Dorsolateral prefrontal cortex (tissue), 120 donors: ENCODE measurements at regions of chr15 and their contacts with region 1.

Region 1: GRCh38 chr15:92808978-92809879 is 90.9 kb upstream of the CHD2 start:
- DNase-seq: peak; percentile 93 to 97 (median 96)
- H3K4me3 ChIP-seq: peak overlapping the region; percentile 52 to 95 (median 73)
- H3K27ac ChIP-seq: peak overlapping the region; percentile 96 to 100 (median 100)
- H3K27me3 ChIP-seq: no peaks in the 10 kb centered on the region
- CTCF ChIP-seq: peak; percentile 88 to 100 (median 98)

Region 2: DNA sequence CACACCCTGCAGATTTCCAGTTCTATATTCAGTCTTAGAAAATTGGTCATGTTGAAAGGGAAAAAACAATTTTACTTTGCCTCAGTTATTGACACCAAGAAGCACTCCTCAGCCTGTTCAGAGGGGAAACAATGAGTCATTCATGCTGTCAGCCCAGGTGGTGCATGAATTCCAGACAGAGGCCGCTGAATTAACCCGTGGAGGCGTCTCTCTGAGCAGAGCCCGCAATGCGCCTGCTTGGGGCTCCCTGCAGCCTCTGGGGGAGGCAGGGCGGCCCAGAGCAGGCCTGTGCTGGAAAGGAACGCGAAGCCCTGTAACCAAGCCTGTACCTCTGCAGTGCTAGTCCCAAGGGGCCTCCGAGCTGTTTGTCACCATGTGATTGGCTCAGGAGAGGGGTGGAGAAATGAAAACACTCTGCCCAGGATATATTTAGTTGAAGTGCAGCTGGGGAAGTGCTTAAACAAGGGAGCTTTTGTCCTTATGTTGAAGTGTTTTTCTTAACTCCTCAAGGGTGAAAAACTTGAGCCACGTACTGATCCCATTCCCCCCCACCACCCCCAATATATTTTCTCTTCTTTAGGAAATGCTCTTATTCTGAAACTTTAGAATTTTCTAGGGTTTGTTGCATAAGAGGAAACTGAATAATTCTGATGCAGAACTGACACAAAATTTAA is 22.6 kb after region 1 on chr15:
- intact Hi-C with region 1: loop called (anchors 1 kb)
- DNase-seq: peak; percentile 72 to 95 (median 92)
- H3K4me3 ChIP-seq: peak overlapping the region; percentile 2 to 64 (median 45)
- H3K27ac ChIP-seq: peak overlapping the region; percentile 94 to 100 (median 99)
- H3K27me3 ChIP-seq: no peaks in the 10 kb centered on the region
- CTCF ChIP-seq: peak in 19 of 56 donors; percentile 7 to 37 (median 22)

Region 3: DNA sequence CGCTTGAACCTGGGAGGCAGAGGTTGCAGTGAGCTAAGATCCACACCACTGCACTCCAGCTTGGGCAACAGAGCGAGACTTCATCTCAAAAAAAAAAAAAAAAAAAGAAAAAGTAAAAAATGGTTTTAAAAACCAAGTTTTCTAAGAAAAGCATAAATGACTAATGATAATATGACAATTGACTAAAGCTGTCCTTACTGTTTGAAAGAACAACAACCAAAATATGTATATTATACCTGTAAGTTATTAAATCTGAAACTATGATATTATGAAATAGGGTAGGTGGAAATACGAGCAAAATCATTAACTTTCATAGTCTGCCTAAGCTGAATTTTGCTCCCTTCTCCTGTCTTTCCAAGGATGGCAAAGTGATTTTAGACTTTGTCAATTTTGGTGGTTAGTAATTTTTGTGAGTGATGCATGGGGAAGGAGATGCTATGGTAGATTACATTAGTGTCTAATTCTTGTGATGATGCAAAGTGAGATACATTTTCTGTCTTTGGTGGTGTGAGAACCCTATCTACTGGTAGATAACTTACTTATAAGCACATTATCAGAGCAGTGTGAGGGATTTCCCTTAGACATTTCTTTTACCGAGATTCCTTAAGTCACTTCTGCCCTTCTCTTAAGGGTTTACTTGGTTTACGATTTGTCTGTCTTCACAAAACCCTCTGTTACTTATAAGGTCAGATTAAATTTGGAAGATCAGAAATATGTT is 80.3 kb after region 1 on chr15:
- intact Hi-C with region 1: no loop called
- DNase-seq: no peak
- H3K4me3 ChIP-seq: peak overlapping the region in 21 of 59 donors; percentile 4 to 96 (median 25)
- H3K27ac ChIP-seq: peak overlapping the region in 37 of 59 donors; percentile 4 to 100 (median 52)
- H3K27me3 ChIP-seq: no peaks in the 10 kb centered on the region
- CTCF ChIP-seq: no peak

Region 4: GRCh38 chr15:92903941-92904831 is 95.0 kb after region 1 on chr15:
- intact Hi-C with region 1: loop called (anchors 1 kb)
- DNase-seq: peak; percentile 97 to 100 (median 99)
- H3K4me3 ChIP-seq: peak overlapping the region; percentile 45 to 97 (median 73)
- H3K27ac ChIP-seq: peak overlapping the region; percentile 77 to 100 (median 99)
- H3K27me3 ChIP-seq: no peaks in the 10 kb centered on the region
- CTCF ChIP-seq: peak in 26 of 56 donors; percentile 7 to 41 (median 19)

Region 5: GRCh38 chr15:92989470-92989869 is 180.2 kb after region 1 on chr15:
- intact Hi-C with region 1: no loop called
- DNase-seq: no peak
- H3K4me3 ChIP-seq: no peak overlapping the region
- H3K27ac ChIP-seq: peak overlapping the region in 25 of 59 donors; percentile 0 to 68 (median 31)
- H3K27me3 ChIP-seq: no peaks in the 10 kb centered on the region
- CTCF ChIP-seq: no peak

Region 6: DNA sequence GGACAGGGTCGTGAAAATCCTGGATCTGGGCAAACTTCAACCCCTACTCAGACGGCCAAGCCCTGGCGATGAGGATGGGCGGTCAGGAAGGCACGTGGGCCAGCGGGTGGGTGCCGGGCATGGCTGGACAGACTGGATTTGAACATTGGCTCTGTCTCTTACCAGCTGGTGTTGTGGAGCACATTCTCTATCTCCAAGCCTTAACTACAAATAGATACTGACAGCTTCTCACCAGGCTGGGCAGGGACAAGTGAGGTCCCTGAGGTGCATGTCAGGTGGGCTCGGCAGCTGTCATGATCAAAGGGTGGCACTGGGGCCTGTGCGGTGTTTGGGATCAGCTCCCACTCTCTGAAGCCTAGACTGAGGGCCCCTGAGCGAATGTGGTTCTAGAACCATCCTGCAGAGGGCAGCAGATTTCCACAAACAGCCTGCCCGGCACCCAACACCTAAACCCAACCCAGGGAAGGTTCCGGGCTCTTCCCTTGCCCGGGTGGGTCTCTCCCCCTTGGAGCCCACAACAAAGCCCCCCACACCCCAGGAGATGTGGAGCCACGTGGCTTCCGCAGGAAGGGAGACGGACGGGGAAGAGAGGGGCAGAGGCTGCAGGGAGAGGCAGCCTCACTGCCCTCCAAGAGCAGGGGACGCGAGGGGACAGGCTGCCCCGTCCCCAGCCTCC is 221.3 kb after region 1 on chr15:
- intact Hi-C with region 1: loop called (anchors 5 kb)
- DNase-seq: peak in 9 of 10 donors; percentile 63 to 83 (median 74)
- H3K4me3 ChIP-seq: peak overlapping the region in 3 of 59 donors; percentile 1 to 14 (median 5)
- H3K27ac ChIP-seq: peak overlapping the region in 52 of 59 donors; percentile 18 to 91 (median 68)
- H3K27me3 ChIP-seq: no peaks in the 10 kb centered on the region
- CTCF ChIP-seq: peak; percentile 47 to 95 (median 89)